Activated B cell treated with CpG ODN at 0.5 μM for 24 hours (primary cell): ENCODE measurements at regions of chr3 and their contacts with region 1.

Region 1: GRCh38 chr3:42443819-42444436 is 33.5 kb upstream of the LYZL4 start:
- DNase-seq: peak; percentile 64
- ATAC-seq: peak; percentile 79
- H3K4me3 Mint-ChIP-seq: no peak overlapping the region
- H3K27ac Mint-ChIP-seq: no peak overlapping the region
- H3K4me1 Mint-ChIP-seq: no peaks in the 10 kb centered on the region
- H3K27me3 Mint-ChIP-seq: peaks cover 12% of the 10 kb centered on the region
- CTCF ChIP-seq: peak; percentile 54

Region 2: GRCh38 chr3:42118762-42119361 is 325.1 kb before region 1 on chr3:
- CTCF ChIA-PET with region 1: no interaction called
- POLR2A ChIA-PET with region 1: no interaction called
- intact Hi-C with region 1: loop called (anchors 1 kb)
- DNase-seq: no peak
- ATAC-seq: peak; percentile 82
- H3K4me3 Mint-ChIP-seq: no peak overlapping the region
- H3K27ac Mint-ChIP-seq: peak overlapping the region; percentile 4
- H3K4me1 Mint-ChIP-seq: peaks cover 92% of the 10 kb centered on the region
- H3K27me3 Mint-ChIP-seq: no peaks in the 10 kb centered on the region
- CTCF ChIP-seq: no peak

Region 3: GRCh38 chr3:42229942-42230688 is 213.8 kb before region 1 on chr3:
- CTCF ChIA-PET with region 1: interaction called, 11 read pairs
- POLR2A ChIA-PET with region 1: no interaction called
- intact Hi-C with region 1: loop called (anchors 1 kb)
- DNase-seq: no peak
- ATAC-seq: no peak
- H3K4me3 Mint-ChIP-seq: no peak overlapping the region
- H3K27ac Mint-ChIP-seq: no peak overlapping the region
- H3K4me1 Mint-ChIP-seq: no peaks in the 10 kb centered on the region
- H3K27me3 Mint-ChIP-seq: peaks cover 13% of the 10 kb centered on the region
- CTCF ChIP-seq: no peak

Region 4: DNA sequence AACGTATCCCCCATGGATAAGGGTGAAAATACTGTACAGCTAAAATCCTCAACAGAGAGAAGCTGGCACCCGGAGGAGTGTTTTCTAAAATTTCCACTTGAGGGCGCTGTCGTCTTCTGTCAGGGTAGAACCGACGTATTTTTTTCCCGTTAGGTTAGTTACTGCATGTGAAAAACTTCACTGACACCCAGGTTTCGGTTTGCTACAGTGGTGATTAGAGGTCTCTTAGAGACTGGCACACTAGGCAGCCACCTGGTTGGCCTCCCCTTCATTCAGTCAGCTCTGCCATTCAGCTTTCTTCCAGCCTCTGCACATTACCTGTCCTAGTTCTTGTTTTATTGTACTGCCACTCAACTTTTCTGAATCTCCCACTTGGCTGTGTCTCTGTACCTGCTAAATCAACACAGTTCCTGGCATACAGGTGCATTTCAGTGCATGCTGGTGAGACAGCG is 196.3 kb before region 1 on chr3:
- CTCF ChIA-PET with region 1: interaction called, 40 read pairs
- POLR2A ChIA-PET with region 1: no interaction called
- intact Hi-C with region 1: loop called (anchors 1 kb)
- DNase-seq: no peak
- ATAC-seq: peak; percentile 49
- H3K4me3 Mint-ChIP-seq: no peak overlapping the region
- H3K27ac Mint-ChIP-seq: no peak overlapping the region
- H3K4me1 Mint-ChIP-seq: peaks cover 2% of the 10 kb centered on the region
- H3K27me3 Mint-ChIP-seq: peaks cover 16% of the 10 kb centered on the region
- CTCF ChIP-seq: no peak

Region 5: GRCh38 chr3:42403737-42404136 is 40.2 kb before region 1 on chr3:
- CTCF ChIA-PET with region 1: no interaction called
- POLR2A ChIA-PET with region 1: no interaction called
- intact Hi-C with region 1: no loop called
- DNase-seq: no peak
- ATAC-seq: no peak
- H3K4me3 Mint-ChIP-seq: no peak overlapping the region
- H3K27ac Mint-ChIP-seq: no peak overlapping the region
- H3K4me1 Mint-ChIP-seq: no peaks in the 10 kb centered on the region
- H3K27me3 Mint-ChIP-seq: peaks cover 7% of the 10 kb centered on the region
- CTCF ChIP-seq: no peak

Region 6: GRCh38 chr3:42459151-42459550 is 15.2 kb after region 1 on chr3:
- CTCF ChIA-PET with region 1: no interaction called
- POLR2A ChIA-PET with region 1: no interaction called
- intact Hi-C with region 1: no loop called
- DNase-seq: no peak
- ATAC-seq: no peak
- H3K4me3 Mint-ChIP-seq: no peak overlapping the region
- H3K27ac Mint-ChIP-seq: no peak overlapping the region
- H3K4me1 Mint-ChIP-seq: no peaks in the 10 kb centered on the region
- H3K27me3 Mint-ChIP-seq: peaks cover 25% of the 10 kb centered on the region
- CTCF ChIP-seq: no peak